Activated CD4-positive, alpha-beta memory T cell treated with anti-CD3 and anti-CD28 coated beads for 36 hours (primary cell): ENCODE measurements at regions of chr3 and their contacts with region 1.

Region 1: GRCh38 chr3:33440323-33441232 is at the start of gene UBP1:
- DNase-seq: peak; percentile 99
- H3K4me3 Mint-ChIP-seq: peak within 1 kb of the TSS; percentile 100
- H3K27ac Mint-ChIP-seq: peak within 1 kb of the TSS; percentile 100
- H3K4me1 Mint-ChIP-seq: peaks cover 39% of the 10 kb centered on the region
- H3K27me3 Mint-ChIP-seq: no peaks in the 10 kb centered on the region
- total RNA-seq, gene UBP1: 52.6 to 53.2 TPM

Region 2: GRCh38 chr3:33113772-33114621 is 326.6 kb before region 1 on chr3 and contains the start of gene CRTAP:
- CTCF ChIA-PET with region 1: no interaction called
- POLR2A ChIA-PET with region 1: no interaction called
- intact Hi-C with region 1: loop called (anchors 5 kb)
- DNase-seq: peak; percentile 91
- H3K4me3 Mint-ChIP-seq: peak within 1 kb of the TSS; percentile 80
- H3K27ac Mint-ChIP-seq: peak within 1 kb of the TSS; percentile 73
- H3K4me1 Mint-ChIP-seq: peaks cover 59% of the 10 kb centered on the region
- H3K27me3 Mint-ChIP-seq: no peaks in the 10 kb centered on the region
- total RNA-seq, gene CRTAP: 57.6 to 60.0 TPM

Region 3: GRCh38 chr3:33385423-33385822 is 55.2 kb before region 1 on chr3:
- CTCF ChIA-PET with region 1: no interaction called
- POLR2A ChIA-PET with region 1: interaction called, 5 read pairs
- intact Hi-C with region 1: loop called (anchors 2 kb)
- DNase-seq: peak; percentile 78
- H3K4me3 Mint-ChIP-seq: no peak overlapping the region
- H3K27ac Mint-ChIP-seq: peak overlapping the region; percentile 59
- H3K4me1 Mint-ChIP-seq: peaks cover 12% of the 10 kb centered on the region
- H3K27me3 Mint-ChIP-seq: no peaks in the 10 kb centered on the region

Region 4: DNA sequence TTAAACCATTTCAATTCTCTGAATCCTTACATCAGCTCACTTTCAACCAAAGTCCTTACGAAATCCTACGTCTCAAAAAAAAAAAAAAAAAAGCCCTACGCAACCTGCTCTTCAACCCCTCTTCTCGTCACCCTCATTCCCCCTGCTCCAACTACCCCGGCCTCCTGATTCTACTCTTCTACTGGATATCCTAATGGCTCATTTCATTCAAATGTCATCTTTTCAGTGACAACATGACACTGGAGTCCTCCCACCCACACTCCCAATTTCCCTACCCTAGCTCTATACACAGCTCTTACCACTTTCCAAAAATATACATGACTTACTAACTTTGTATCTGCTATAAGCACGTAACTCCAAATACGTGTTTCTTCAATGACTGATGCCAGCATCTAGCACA is 11.8 kb before region 1 on chr3:
- CTCF ChIA-PET with region 1: interaction called, 4 read pairs
- POLR2A ChIA-PET with region 1: interaction called, 12 read pairs
- intact Hi-C with region 1: no loop called
- DNase-seq: no peak
- H3K4me3 Mint-ChIP-seq: no peak overlapping the region
- H3K27ac Mint-ChIP-seq: no peak overlapping the region
- H3K4me1 Mint-ChIP-seq: peaks cover 67% of the 10 kb centered on the region
- H3K27me3 Mint-ChIP-seq: no peaks in the 10 kb centered on the region

Region 5: DNA sequence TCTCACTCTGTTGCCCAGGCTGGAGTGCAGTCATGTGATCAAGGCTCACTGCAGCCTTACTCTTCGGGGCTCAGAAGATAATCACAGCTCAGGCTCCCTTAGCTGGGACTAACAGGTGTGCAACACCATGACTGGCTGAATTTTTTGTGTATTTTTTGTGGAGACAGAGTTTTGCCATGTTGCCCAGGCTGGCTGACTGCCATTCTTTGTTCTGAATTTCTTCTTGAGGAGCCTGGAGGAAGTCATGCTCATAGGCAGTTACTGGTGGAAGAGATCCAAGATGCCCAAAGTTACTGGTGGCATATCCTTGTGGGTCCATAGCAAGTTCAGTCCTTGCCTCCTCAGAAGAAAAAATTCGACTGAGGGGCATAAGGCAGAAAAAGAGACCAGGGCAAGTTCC is 16.2 kb after region 1 on chr3:
- CTCF ChIA-PET with region 1: no interaction called
- POLR2A ChIA-PET with region 1: no interaction called
- intact Hi-C with region 1: no loop called
- DNase-seq: no peak
- H3K4me3 Mint-ChIP-seq: no peak overlapping the region
- H3K27ac Mint-ChIP-seq: no peak overlapping the region
- H3K4me1 Mint-ChIP-seq: peaks cover 2% of the 10 kb centered on the region
- H3K27me3 Mint-ChIP-seq: no peaks in the 10 kb centered on the region

Region 6: GRCh38 chr3:33798411-33799201 is 358.0 kb after region 1 on chr3 and contains the start of gene PDCD6IP:
- CTCF ChIA-PET with region 1: interaction called, 3 read pairs
- POLR2A ChIA-PET with region 1: interaction called, 5 read pairs
- intact Hi-C with region 1: loop called (anchors 2 kb)
- DNase-seq: peak; percentile 94
- H3K4me3 Mint-ChIP-seq: peak within 1 kb of the TSS; percentile 95
- H3K27ac Mint-ChIP-seq: peak within 1 kb of the TSS; percentile 89
- H3K4me1 Mint-ChIP-seq: peaks cover 56% of the 10 kb centered on the region
- H3K27me3 Mint-ChIP-seq: no peaks in the 10 kb centered on the region
- total RNA-seq, gene PDCD6IP: 163 to 168 TPM